ENCODE measurements at regions of chr15 and their contacts with region 1.

Region 1: GRCh38 chr15:55649054-55649423 is 60.9 kb upstream of the PYGO1 start:
- H3K4me3 ChIP-seq: no peak overlapping the region
- H3K27ac ChIP-seq: no peak overlapping the region
- H3K4me1 ChIP-seq: no peaks in the 10 kb centered on the region; the same call in 1 of the 2 replicates
- CTCF ChIP-seq: no peak

Region 2: DNA sequence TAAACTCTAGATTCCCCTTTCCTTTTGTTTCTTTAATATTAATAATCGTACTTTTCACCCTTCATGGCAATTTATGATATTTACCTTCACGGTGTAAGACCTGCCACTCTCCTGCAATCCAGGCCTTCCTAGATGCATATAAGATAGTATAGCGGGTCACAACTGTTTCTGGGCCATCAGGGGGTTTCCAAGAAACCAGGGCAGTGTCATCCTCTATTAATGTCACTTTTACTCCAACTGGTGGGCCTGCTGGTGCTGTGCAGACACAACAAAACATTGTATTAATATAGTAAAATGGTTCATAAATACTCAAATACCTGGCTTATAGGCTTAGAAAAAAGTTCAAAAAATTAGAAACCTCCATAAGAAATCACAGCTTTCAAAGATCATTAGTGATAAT is 12.0 kb before region 1 on chr15:
- CTCF ChIA-PET with region 1: no interaction called
- POLR2A ChIA-PET with region 1: no interaction called
- H3K4me3 ChIP-seq: no peak overlapping the region
- H3K27ac ChIP-seq: no peak overlapping the region
- H3K4me1 ChIP-seq: no peaks in the 10 kb centered on the region
- CTCF ChIP-seq: no peak

Region 3: GRCh38 chr15:55775316-55775715 is 126.3 kb after region 1 on chr15:
- CTCF ChIA-PET with region 1: interaction called, 16 read pairs
- POLR2A ChIA-PET with region 1: no interaction called
- H3K4me3 ChIP-seq: no peak overlapping the region
- H3K27ac ChIP-seq: no peak overlapping the region
- H3K4me1 ChIP-seq: no peaks in the 10 kb centered on the region
- CTCF ChIP-seq: no peak

Region 4: DNA sequence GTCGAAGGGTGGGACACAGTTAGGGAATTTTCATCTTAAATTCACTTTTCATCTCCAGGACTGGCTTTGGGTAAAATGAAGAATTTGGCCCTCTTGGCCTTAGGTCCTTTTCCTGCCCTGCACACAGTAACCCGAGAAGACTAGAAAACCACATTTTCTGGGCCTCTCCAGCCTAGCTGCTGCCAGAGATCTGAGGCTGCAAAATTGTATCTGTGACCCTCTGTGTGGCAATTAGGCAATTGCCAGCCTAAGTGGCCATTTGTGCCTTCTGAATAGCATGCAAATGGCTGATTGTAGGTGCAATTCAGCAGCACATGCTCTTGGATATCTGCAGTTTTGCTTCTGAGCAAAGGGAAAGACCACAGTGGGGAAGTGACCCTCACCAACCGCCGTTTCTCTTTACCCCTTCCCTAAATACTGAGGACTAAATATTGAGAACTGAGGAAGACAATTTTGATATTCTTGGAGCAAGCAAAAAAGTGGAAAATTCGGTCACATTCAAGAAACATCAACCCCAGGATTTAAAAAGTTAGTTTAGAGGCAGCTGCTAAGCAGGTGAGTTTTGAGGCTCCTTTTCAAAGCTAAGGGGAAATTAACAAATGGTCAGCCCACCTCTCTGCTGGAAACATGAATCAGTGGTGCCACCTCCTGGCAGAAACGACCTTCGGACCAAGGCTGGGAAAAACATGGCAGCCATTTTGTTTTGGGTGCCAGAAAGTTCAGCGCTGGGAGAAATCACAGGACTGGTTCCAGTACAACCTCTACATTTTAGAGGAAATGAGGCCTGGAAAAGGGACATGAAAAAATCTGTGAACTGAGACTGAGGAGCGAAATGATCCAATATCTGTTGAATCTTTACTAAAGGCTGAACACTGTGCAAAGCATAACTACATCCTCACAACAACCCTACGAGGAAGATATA is 150.5 kb after region 1 on chr15:
- CTCF ChIA-PET with region 1: interaction called, 38 read pairs
- POLR2A ChIA-PET with region 1: no interaction called
- H3K4me3 ChIP-seq: no peak overlapping the region
- H3K27ac ChIP-seq: no peak overlapping the region
- H3K4me1 ChIP-seq: peaks cover 4% of the 10 kb centered on the region
- CTCF ChIP-seq: peak; percentile 52; the same call in 1 of the 2 replicates

Region 5: GRCh38 chr15:55846116-55846707 is 197.2 kb after region 1 on chr15:
- CTCF ChIA-PET with region 1: interaction called, 26 read pairs
- POLR2A ChIA-PET with region 1: no interaction called
- H3K4me3 ChIP-seq: no peak overlapping the region
- H3K27ac ChIP-seq: no peak overlapping the region
- H3K4me1 ChIP-seq: no peaks in the 10 kb centered on the region
- CTCF ChIP-seq: 0 out of 2 replicates have a peak, but pooled peaks have one; percentile 10